CD8-positive, alpha-beta T cell (primary cell): ENCODE measurements at regions of chrX and their contacts with region 1.

Region 1: DNA sequence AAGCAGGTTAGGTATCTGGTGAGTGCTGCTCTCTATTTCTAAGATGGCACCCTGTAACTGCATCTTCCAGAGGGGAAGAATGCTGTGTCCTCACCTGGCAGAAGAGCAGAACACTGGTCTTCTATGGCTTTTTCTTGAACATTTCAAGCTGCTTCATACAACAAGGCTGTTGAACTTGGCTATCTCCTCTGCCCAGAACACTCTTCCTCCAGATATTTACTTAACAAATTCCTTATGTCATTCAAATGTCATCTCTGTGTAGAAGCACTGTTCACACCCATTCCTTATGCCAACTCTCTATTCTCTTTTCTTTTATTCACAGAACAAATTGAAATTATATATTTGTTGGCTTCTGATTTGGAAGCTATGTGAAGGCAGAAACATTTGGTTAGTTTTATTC is 54.5 kb downstream of the LDOC1 start:
- DNase-seq: no peak
- ATAC-seq: no peak
- H3K4me3 ChIP-seq: no peak overlapping the region
- H3K4me3 Mint-ChIP-seq: no peak overlapping the region
- H3K27ac ChIP-seq: no peak overlapping the region
- H3K27ac Mint-ChIP-seq: no peak overlapping the region
- H3K4me1 ChIP-seq: no peaks in the 10 kb centered on the region
- H3K4me1 Mint-ChIP-seq: no peaks in the 10 kb centered on the region
- H3K27me3 ChIP-seq: no peaks in the 10 kb centered on the region
- H3K27me3 Mint-ChIP-seq: no peaks in the 10 kb centered on the region
- CTCF ChIP-seq: no peak

Region 2: GRCh38 chrX:141176586-141177451 is 54.4 kb after region 1 on chrX and contains the start of gene LDOC1:
- CTCF ChIA-PET with region 1: no interaction called
- POLR2A ChIA-PET with region 1: no interaction called
- intact Hi-C with region 1: loop called in 1 of 2 experiments (anchors 2 kb)
- DNase-seq: peak; percentile 17 to 79 (median 64)
- ATAC-seq: peak; percentile 81
- H3K4me3 ChIP-seq: peak within 1 kb of the TSS; percentile 49 to 51
- H3K4me3 Mint-ChIP-seq: peak within 1 kb of the TSS; percentile 78
- H3K27ac ChIP-seq: peak within 1 kb of the TSS in 1 of 2 experiments; percentile 42
- H3K27ac Mint-ChIP-seq: no peak within 1 kb of the TSS
- H3K4me1 ChIP-seq: no peaks in the 10 kb centered on the region
- H3K4me1 Mint-ChIP-seq: peaks cover 9% of the 10 kb centered on the region
- H3K27me3 ChIP-seq: no peaks in the 10 kb centered on the region
- H3K27me3 Mint-ChIP-seq: no peaks in the 10 kb centered on the region
- CTCF ChIP-seq: no peak
- total RNA-seq, gene LDOC1: 2.1 to 2.2 TPM